ENCODE measurements at regions of chr5 and their contacts with region 1.

Region 1: DNA sequence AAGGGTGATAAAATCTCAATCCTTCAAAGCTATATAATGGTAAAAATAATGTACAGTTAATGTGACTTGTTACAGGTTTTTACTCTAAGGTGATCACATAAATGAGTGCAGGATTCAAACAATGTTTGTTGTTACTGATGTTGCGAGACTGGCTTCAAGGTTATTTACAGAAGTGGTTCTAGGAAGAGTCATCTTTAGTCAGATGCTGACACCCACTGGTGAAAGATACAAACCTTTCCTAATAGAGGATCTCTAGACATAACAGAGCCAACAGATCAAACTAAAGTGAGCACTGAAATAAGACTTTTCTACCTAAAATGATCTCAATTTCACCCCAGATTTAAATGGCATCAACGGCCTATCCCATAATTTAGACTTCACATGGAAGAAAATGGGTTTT is 20.2 kb downstream of the ARSB start:
- DNase-seq: peak; percentile 34
- CTCF ChIP-seq: peak; percentile 57

Region 2: GRCh38 chr5:78273436-78273835 is 691.5 kb before region 1 on chr5:
- in situ Hi-C with region 1: no loop called
- DNase-seq: no peak
- CTCF ChIP-seq: no peak

Region 3: GRCh38 chr5:78899922-78900362 is 64.9 kb before region 1 on chr5:
- in situ Hi-C with region 1: loop called (anchors 10 kb)
- DNase-seq: peak; percentile 28
- CTCF ChIP-seq: peak; percentile 70

Region 4: DNA sequence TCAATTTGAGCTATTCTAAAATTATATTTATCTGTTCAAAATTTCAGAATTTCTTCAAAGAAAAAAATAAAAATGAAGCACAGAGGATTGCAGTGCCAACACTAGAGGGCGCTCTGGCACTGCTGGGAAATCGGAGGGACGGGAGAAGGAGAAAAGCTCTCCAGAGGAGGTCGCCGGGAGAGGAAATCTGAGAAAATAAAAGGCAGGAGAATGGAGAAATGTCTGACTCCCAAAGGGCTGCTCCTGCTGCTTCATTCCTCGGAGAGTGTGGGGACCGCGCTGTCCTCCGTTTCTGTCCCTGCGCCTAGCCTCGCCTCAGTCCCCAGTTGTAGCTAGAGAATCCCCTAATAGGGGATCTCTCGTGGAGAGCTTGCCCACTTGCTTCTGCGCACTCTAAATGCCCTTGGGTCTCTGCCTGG is 60.2 kb after region 1 on chr5:
- in situ Hi-C with region 1: no loop called
- DNase-seq: peak; percentile 26
- CTCF ChIP-seq: peak; percentile 84

Measured in GM13977 (cell line).